ENCODE measurements at regions of chr2 and their contacts with region 1.

Region 1: GRCh38 chr2:54704688-54705605 is 18.5 kb upstream of the EML6 start:
- DNase-seq: no peak
- H3K4me3 ChIP-seq: no peak overlapping the region
- CTCF ChIP-seq: peak; percentile 12

Region 2: DNA sequence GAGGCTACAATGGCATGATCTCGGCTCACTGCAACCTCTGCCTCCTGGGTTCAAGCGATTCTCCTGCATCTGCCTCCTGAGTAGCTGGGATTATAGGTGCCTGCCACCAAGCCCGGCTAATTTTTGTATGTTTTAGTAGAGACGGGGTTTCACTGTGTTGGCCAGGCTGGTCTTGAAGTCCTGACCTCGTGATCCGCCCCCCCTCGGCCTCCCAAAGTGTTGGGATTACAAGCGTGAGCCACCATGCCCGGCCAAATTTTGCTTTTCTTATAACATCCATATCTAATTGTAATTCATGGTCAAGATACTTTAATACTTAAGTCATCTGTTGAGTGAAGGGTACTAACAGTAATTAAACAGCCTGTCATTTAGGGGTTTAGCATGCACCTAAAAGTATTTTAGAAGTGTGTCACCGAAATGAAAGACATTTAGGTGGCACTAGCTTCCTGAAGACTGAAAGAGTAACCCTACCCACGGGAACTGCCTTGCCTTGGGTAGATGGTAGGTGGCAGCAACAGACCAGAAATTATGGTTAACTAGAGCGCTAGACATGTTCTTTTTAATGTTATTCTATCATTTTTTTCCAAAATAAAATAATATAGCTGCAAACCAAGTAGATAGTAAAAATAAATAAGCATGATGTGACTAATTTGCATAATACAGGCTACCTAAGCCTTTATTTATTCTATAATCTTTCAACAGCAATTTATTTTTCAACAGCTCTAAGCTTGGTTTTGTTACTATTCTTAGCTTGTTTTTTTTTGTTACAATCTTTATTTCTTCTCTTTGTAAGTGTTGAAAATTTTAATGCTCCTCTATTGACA is 598.1 kb before region 1 on chr2:
- CTCF ChIA-PET with region 1: interaction called, 178 read pairs
- POLR2A ChIA-PET with region 1: no interaction called
- DNase-seq: no peak
- H3K4me3 ChIP-seq: no peak overlapping the region
- CTCF ChIP-seq: peak; percentile 64

Region 3: GRCh38 chr2:54161660-54162424 is 543.1 kb before region 1 on chr2:
- CTCF ChIA-PET with region 1: interaction called, 39 read pairs
- POLR2A ChIA-PET with region 1: no interaction called
- DNase-seq: no peak
- H3K4me3 ChIP-seq: no peak overlapping the region
- CTCF ChIP-seq: no peak

Region 4: DNA sequence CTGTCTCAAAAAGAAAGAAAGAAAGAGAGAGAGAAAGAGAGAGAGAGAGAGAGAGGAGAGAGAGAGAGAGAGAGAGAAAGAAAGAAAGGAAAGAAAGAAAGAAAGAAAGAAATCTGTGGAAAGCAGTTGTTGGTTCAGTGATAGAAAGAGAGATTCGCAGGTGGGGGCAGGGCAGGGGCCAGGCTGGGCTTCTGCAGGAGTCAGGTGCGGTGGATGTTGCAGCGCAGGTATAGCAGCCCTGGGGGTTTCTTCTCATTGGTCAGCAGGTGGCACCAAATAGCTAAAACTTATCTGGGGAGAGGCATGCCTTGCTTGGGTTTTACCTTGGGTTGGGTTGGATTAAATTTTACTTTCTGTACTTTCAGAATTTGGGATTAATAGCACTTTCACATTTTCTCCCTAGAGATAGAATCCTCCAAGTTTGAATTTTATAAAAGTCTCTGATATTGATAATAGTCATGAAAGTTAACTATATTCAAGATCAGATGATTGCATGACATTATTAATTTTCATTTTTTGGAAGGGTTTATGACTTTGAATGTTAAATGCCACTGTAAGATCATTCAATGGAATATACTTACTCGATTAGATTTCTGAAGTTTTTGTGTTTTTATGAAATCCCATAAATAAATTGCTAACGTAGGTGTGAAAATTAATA is 182.2 kb before region 1 on chr2:
- CTCF ChIA-PET with region 1: interaction called, 83 read pairs
- POLR2A ChIA-PET with region 1: no interaction called
- DNase-seq: no peak
- H3K4me3 ChIP-seq: no peak overlapping the region
- CTCF ChIP-seq: peak; percentile 50

Region 5: DNA sequence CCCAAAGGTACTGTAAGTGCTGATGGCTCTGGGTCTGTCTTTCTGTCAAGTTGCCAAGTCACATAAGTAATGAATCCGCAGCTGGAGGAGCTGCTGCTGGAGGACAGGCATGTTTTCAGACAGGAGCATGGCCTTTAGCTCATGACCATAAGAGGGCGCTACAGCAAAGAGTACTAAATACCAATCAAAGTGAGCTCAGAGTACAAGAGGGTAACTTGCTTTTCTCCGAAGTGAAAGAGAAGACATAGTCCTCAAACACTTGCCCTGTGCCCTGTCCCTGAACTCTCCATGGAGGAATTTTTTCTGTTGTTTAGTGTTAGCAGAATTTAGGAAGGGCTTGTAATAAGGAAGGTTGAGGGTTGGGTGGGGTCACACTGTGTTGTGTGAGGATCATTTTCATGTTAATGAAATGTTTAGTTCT is 39.5 kb before region 1 on chr2:
- CTCF ChIA-PET with region 1: interaction called, 27 read pairs
- POLR2A ChIA-PET with region 1: no interaction called
- DNase-seq: no peak
- H3K4me3 ChIP-seq: no peak overlapping the region
- CTCF ChIP-seq: peak; percentile 45

Region 6: DNA sequence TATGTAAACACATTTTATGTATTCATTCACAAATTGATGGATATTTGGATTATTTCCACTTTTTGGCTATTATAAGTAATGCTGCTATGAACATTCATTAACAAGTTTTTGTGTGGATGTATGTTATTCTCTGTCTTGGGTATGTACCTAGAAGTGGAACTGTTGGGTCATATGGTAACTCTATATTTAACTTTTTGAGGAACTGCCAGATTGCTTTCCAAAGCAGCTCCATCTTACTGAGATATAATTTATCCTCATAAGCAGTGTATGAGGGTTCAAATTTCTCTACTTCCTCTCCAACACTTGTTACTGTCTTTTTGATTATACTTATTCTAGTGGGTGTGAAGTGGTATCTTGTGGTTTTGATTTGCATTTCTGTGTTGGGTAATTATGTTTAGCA is 11.4 kb after region 1 on chr2:
- CTCF ChIA-PET with region 1: interaction called, 17 read pairs
- POLR2A ChIA-PET with region 1: no interaction called
- DNase-seq: no peak
- H3K4me3 ChIP-seq: no peak overlapping the region
- CTCF ChIP-seq: no peak

Region 7: DNA sequence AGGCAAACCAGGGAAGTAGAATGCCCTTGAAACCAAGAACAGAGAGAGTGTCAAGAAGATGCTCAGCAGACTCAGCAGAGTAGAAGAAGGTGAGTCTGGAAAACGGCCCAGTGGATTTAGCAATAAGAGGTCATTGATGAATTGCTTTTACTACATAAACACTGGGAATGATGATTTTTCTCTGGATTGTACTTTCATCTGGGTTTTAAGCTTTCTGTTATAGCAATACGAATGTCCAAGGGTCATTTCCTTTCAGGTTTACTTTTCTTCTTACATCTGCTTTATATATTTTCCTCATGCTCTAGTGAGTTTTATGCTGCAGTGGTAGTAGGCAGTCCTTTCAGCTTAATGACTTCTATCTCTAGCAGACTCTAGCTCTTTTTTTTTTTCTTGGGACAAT is 35.4 kb after region 1 on chr2:
- CTCF ChIA-PET with region 1: no interaction called
- POLR2A ChIA-PET with region 1: no interaction called
- DNase-seq: no peak
- H3K4me3 ChIP-seq: no peak overlapping the region
- CTCF ChIP-seq: no peak

Region 8: DNA sequence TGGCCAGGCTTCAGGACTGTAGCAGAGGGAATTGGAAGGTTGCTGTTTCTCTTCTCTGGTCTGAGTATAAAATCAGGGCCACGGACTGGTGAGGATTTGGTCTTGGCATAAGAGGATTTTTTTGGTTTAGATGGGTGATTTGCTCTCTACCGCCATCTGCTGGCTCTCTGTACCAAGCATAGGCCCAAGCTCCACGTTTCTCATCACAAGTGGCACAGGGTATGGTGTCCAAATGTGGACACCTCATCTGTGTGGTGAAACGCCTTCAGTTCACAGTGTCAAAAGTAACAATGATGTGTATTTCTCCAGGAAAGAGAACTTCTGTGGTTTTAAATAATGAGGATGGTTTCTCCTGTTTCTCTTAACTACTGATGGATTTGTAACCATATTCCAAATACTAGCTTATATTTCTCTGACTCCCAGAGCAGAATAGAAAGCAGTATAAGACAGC is 133.7 kb after region 1 on chr2:
- CTCF ChIA-PET with region 1: interaction called, 35 read pairs
- POLR2A ChIA-PET with region 1: no interaction called
- DNase-seq: no peak
- H3K4me3 ChIP-seq: no peak overlapping the region
- CTCF ChIP-seq: peak; percentile 85

Region 9: DNA sequence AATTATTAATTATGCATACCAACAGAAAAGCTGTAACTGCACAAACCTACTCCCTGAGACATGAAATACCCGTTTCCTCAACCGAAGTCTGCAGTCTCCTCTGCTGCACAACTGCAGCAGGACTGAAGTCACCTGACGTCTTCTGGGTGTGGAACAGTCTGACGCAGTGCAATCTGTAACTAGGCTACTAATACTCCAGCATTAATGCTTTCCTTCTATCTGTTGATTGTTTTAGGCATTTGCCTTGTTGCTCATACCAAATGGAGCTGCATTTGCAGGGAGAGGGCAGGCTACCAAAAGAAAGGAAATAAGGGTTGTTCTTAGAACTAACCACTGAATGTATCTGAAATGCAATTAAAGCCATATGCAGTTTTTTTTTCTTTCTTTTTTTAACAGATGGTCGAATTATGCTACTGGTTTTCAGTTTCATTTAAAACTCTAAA is 305.2 kb after region 1 on chr2:
- CTCF ChIA-PET with region 1: no interaction called
- POLR2A ChIA-PET with region 1: no interaction called
- DNase-seq: no peak
- H3K4me3 ChIP-seq: peak overlapping the region; percentile 34; the same call in 1 of the 2 replicates
- CTCF ChIP-seq: no peak